ENCODE measurements at regions of chr9 and their contacts with region 1.

Region 1: GRCh38 chr9:102728946-102729345 is 266.2 kb upstream of the CYLC2 start:
- DNase-seq: no peak
- ATAC-seq: no peak
- H3K4me3 ChIP-seq: no peak overlapping the region
- H3K27ac ChIP-seq: no peak overlapping the region
- H3K4me1 ChIP-seq: no peaks in the 10 kb centered on the region
- H3K27me3 ChIP-seq: no peaks in the 10 kb centered on the region
- CTCF ChIP-seq: no peak
- EP300 ChIP-seq: no peak
- POLR2A ChIP-seq: no peak
- RAD21 ChIP-seq: no peak

Region 2: DNA sequence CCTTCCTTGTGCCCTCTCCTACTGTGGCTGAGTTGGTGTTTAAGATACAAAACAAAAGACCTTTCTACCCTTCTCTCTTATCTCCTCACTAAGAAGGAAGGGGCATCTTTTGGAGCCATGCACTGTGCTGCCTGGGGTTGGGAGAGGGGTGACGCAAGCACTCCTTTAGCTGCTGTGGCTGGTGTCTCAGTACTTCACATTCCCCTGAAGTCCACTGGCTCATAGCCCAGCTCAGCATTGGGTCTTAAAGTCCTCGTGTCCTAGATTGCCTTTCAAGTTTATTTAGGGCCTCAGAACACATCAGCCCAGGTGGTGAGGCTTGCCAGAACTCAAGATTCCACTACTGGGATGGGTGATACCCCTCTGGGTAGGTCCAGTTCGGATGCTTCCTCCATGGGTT is 59.7 kb before region 1 on chr9:
- CTCF ChIA-PET with region 1: no interaction called
- POLR2A ChIA-PET with region 1: no interaction called
- in situ Hi-C with region 1: no loop called
- intact Hi-C with region 1: loop called (anchors 10 kb)
- DNase-seq: no peak
- ATAC-seq: no peak
- H3K4me3 ChIP-seq: no peak overlapping the region
- H3K27ac ChIP-seq: no peak overlapping the region
- H3K4me1 ChIP-seq: no peaks in the 10 kb centered on the region
- H3K27me3 ChIP-seq: no peaks in the 10 kb centered on the region
- CTCF ChIP-seq: no peak
- EP300 ChIP-seq: no peak
- POLR2A ChIP-seq: no peak
- RAD21 ChIP-seq: no peak

Region 3: GRCh38 chr9:102740577-102740976 is 11.6 kb after region 1 on chr9:
- CTCF ChIA-PET with region 1: no interaction called
- POLR2A ChIA-PET with region 1: no interaction called
- in situ Hi-C with region 1: no loop called
- intact Hi-C with region 1: no loop called
- DNase-seq: no peak
- ATAC-seq: no peak
- H3K4me3 ChIP-seq: no peak overlapping the region
- H3K27ac ChIP-seq: no peak overlapping the region
- H3K4me1 ChIP-seq: no peaks in the 10 kb centered on the region
- H3K27me3 ChIP-seq: no peaks in the 10 kb centered on the region
- CTCF ChIP-seq: no peak
- EP300 ChIP-seq: no peak
- POLR2A ChIP-seq: no peak
- RAD21 ChIP-seq: no peak

Region 4: GRCh38 chr9:102769307-102769706 is 40.4 kb after region 1 on chr9:
- CTCF ChIA-PET with region 1: no interaction called
- POLR2A ChIA-PET with region 1: no interaction called
- in situ Hi-C with region 1: no loop called
- intact Hi-C with region 1: no loop called
- DNase-seq: no peak
- ATAC-seq: no peak
- H3K4me3 ChIP-seq: no peak overlapping the region
- H3K27ac ChIP-seq: no peak overlapping the region
- H3K4me1 ChIP-seq: no peaks in the 10 kb centered on the region
- H3K27me3 ChIP-seq: no peaks in the 10 kb centered on the region
- CTCF ChIP-seq: no peak
- EP300 ChIP-seq: no peak
- POLR2A ChIP-seq: no peak
- RAD21 ChIP-seq: no peak

Measured in K562 (cell line).